Heart right ventricle (tissue), 16 donors: ENCODE measurements at regions of chr2 and their contacts with region 1.

Region 1: GRCh38 chr2:38330754-38331153 is 46.3 kb downstream of the ATL2 start:
- DNase-seq: no peak
- ATAC-seq: no peak
- H3K4me3 ChIP-seq: no peak overlapping the region
- H3K27ac ChIP-seq: no peak overlapping the region
- H3K4me1 ChIP-seq: peaks cover 0 to 13% (median 3%) of the 10 kb centered on the region in 9 donors
- H3K27me3 ChIP-seq: no peaks in the 10 kb centered on the region
- CTCF ChIP-seq: no peak

Region 2: GRCh38 chr2:38446420-38446819 is 115.7 kb after region 1 on chr2:
- intact Hi-C with region 1: loop called in 1 of 10 experiments (anchors 10 kb)
- DNase-seq: peak in 1 of 2 donors; percentile 8
- ATAC-seq: peak in 4 of 8 donors; percentile 25 to 58 (median 42)
- H3K4me3 ChIP-seq: no peak overlapping the region
- H3K27ac ChIP-seq: no peak overlapping the region
- H3K4me1 ChIP-seq: peaks cover 0 to 26% (median 15%) of the 10 kb centered on the region in 9 donors
- H3K27me3 ChIP-seq: no peaks in the 10 kb centered on the region
- CTCF ChIP-seq: peak in 7 of 9 donors; percentile 17 to 53 (median 28)